ENCODE measurements at regions of chr18 and their contacts with region 1.

Region 1: DNA sequence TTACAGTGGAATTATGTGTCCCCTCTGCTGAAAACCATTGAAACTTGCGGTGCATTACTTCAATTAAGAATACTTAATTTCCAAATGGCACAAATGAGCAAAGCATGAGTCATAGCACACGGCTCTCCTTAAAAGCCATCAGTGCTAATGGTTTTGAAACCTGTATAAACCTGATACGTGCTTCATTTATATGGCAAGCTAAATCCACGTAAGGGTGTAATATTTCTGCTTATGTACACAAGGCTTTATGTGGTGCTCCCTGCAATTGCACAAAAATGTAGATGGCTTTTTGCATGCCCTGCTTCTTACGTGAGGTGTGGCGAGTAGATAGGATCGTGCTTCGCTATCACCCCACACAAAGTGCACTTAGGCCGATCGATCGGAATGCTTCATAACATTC is 840.9 kb downstream of the GALR1 start:
- DNase-seq: no peak
- H3K4me3 Mint-ChIP-seq: no peak overlapping the region
- H3K27ac Mint-ChIP-seq: no peak overlapping the region
- H3K4me1 Mint-ChIP-seq: no peaks in the 10 kb centered on the region
- H3K27me3 Mint-ChIP-seq: no peaks in the 10 kb centered on the region
- CTCF ChIP-seq: no peak

Region 2: DNA sequence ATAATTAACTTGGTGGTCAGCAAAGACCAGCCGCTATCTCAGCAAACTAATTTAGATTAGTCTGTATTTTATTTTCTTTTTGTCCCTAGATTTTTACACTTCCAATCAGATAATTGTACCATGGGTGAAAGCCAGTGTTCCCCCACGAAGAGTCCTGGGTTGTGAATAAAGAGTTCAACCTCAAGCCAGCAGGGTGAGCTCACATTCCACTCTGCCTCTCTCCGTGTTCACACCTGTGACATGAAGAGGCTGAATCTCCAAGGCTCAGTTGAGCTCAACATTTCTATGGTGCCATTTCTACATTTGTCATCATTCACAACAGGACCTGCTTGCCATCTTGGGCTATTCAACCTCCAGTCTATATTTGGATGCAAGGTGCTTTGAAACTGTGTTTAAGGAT is 69.4 kb before region 1 on chr18:
- CTCF ChIA-PET with region 1: no interaction called
- intact Hi-C with region 1: no loop called
- DNase-seq: no peak
- H3K4me3 Mint-ChIP-seq: no peak overlapping the region
- H3K27ac Mint-ChIP-seq: no peak overlapping the region
- H3K4me1 Mint-ChIP-seq: no peaks in the 10 kb centered on the region
- H3K27me3 Mint-ChIP-seq: no peaks in the 10 kb centered on the region
- CTCF ChIP-seq: no peak

Region 3: GRCh38 chr18:78031589-78031988 is 59.0 kb before region 1 on chr18:
- CTCF ChIA-PET with region 1: no interaction called
- intact Hi-C with region 1: loop called (anchors 5 kb)
- DNase-seq: no peak
- H3K4me3 Mint-ChIP-seq: no peak overlapping the region
- H3K27ac Mint-ChIP-seq: no peak overlapping the region
- H3K4me1 Mint-ChIP-seq: no peaks in the 10 kb centered on the region
- H3K27me3 Mint-ChIP-seq: no peaks in the 10 kb centered on the region
- CTCF ChIP-seq: no peak

Region 4: GRCh38 chr18:78123144-78123909 is 32.7 kb after region 1 on chr18:
- CTCF ChIA-PET with region 1: no interaction called
- intact Hi-C with region 1: no loop called
- DNase-seq: no peak
- H3K4me3 Mint-ChIP-seq: no peak overlapping the region
- H3K27ac Mint-ChIP-seq: no peak overlapping the region
- H3K4me1 Mint-ChIP-seq: no peaks in the 10 kb centered on the region
- H3K27me3 Mint-ChIP-seq: no peaks in the 10 kb centered on the region
- CTCF ChIP-seq: no peak

Region 5: DNA sequence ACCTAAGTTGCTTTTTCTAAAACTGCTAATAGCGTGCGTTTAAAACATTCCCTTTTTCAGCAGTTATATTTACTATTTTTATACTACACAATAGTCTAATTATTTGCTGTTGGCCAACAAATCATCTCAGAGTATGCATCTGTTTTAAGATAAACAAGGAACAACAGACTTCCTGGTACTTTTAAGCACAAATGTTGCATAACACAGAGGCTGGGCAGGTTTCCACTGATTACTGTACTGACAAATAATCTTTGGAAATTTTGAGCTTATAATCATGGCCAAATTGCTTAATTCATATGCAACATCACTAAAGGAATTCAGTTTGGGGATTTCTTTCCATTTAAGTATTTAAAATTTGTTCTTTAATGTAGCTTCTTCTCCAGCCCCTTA is 151.7 kb after region 1 on chr18:
- CTCF ChIA-PET with region 1: no interaction called
- intact Hi-C with region 1: loop called (anchors 5 kb)
- DNase-seq: no peak
- H3K4me3 Mint-ChIP-seq: no peak overlapping the region
- H3K27ac Mint-ChIP-seq: no peak overlapping the region
- H3K4me1 Mint-ChIP-seq: no peaks in the 10 kb centered on the region
- H3K27me3 Mint-ChIP-seq: no peaks in the 10 kb centered on the region
- CTCF ChIP-seq: no peak

Region 6: DNA sequence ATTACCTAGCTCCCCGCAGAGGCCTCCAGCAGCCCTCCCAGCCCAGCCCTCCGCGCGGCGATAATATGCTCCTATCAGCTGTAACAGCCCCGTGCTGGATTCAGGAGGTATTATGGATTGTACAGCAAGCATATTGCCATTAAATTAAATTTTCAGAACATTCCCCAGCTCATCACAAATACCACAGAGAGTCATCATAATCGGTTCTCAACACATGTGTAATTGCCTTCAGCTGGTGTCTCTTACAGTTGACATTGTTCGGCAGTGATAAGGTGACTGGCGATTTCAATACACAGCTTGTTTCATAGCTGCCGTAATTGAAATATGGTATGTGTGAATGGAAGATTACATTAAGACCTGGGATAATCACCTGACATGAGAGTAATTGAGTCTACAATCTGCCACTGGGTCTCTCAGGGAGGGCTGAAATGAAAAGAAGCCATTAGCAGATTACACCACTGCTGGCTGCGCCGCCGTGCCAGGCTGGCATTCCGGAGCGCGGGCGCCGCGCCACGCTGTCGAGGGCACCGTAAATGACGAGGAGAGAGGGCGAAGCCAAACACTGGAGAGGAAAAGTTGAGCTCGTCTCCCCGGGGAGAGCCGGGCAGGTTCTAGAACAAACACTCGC is 339.7 kb after region 1 on chr18:
- CTCF ChIA-PET with region 1: no interaction called
- intact Hi-C with region 1: no loop called
- DNase-seq: no peak
- H3K4me3 Mint-ChIP-seq: no peak overlapping the region
- H3K27ac Mint-ChIP-seq: no peak overlapping the region
- H3K4me1 Mint-ChIP-seq: no peaks in the 10 kb centered on the region
- H3K27me3 Mint-ChIP-seq: no peaks in the 10 kb centered on the region
- CTCF ChIP-seq: no peak

Measured in Calu3 (cell line).